Activated T-helper 1 cell treated with anti-CD3 and anti-CD28 coated beads, Interleukin-12 subunit alpha, Interleukin-12 subunit beta, Interleukin-2, Interleukin-4 antibody, amounts not matched to agents 30 ng/mL and 10 ng/mL and 1 ng/mL, durations not matched to agents 14 hours and 24 hours and 36 hours (primary cell): ENCODE measurements at regions of chr11 and their contacts with region 1.

Region 1: GRCh38 chr11:60841797-60842667 is at the start of gene CCDC86:
- DNase-seq: peak; percentile 98
- H3K4me3 Mint-ChIP-seq: peak within 1 kb of the TSS; percentile 91
- H3K27ac Mint-ChIP-seq: peak within 1 kb of the TSS; percentile 83
- H3K4me1 Mint-ChIP-seq: peaks cover 46% of the 10 kb centered on the region
- H3K27me3 Mint-ChIP-seq: peaks cover 1% of the 10 kb centered on the region
- total RNA-seq, gene CCDC86: 88.2 and 92.2 TPM in 2 replicates

Region 2: DNA sequence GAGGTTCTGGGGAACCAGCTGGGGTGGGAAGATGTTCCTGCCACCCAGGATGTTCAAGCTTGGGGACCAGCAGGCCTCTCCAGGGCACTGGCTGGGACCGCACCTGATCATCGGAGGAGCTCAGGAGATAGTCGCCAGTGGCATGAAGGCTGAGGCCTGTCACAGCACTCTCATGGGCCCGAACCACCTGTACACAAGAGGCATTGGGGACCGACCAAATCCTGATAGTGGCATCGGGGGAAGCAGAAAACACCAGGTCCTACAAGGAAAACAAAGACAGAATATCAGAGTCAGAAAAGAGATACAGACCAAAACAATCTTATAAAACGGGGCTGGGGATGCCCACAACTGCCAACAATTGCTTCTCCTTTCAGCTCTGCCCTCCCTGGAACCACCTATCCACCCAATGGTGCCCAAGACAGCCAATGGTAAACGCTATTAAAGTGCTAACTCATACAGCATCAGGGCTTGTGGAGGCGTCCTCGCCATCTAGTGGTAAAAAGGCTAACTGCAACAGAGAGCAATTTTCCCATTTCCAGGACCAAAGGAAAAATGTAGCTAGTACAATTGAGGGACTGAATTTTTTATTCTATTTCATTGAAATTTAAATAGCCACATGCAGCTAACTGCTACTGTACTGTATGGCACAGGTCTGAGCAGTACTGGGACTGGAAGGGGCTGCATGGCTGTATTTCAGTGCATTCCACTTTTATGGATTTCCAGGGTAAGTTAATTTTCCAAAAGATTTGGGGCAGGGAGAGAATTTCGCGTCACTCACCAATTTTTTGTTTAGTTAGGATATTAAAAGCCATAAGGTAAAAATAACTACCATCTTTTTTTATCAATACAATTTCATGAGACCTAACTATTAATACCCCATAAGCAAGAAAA is 57.3 kb after region 1 on chr11:
- intact Hi-C with region 1: loop called (anchors 1 kb)
- DNase-seq: no peak
- H3K4me3 Mint-ChIP-seq: no peak overlapping the region
- H3K27ac Mint-ChIP-seq: peak overlapping the region; percentile 12
- H3K4me1 Mint-ChIP-seq: peaks cover 10% of the 10 kb centered on the region
- H3K27me3 Mint-ChIP-seq: no peaks in the 10 kb centered on the region

Region 3: DNA sequence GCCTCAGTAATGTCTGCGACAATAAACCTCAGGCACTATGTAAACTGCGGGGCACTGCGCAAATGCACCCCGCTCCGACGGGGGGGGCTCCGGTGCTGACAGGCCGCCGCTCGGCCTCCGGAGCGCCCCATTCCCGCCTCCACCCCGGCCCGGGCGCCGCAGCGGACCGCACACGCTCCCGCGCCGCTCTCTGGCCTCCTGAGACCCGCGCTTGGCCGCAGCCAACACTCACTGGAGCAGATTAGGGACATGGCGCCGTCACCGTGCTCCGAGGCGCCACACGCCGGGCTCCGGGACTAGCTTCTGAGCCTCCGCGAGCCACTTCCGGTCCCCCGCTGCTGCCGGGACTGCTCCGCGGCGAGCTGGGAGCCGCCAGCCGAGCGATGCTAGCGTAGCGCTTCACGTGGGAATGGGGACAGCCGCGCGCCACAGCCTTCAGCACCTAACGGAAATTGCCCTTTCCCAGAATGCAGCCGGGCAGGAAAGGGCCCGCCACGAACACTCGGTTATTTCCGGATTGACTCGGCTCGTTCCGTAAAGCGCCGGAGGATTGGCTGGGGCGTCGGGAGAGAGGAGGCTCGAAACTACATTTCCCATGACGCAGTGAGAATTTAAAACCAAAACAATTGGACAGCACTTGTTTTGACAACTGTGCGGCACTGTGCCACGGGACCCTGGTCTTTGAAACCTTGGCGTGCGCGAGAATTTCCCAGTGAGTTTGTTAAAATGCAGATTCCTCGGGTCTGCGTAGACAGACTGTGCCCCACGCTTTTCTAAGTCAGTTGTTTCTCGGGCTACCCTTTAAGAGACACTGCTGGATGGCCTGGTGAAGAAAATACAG is 64.3 kb after region 1 on chr11 and contains the start of gene PRPF19:
- intact Hi-C with region 1: loop called (anchors 1 kb)
- DNase-seq: peak; percentile 99
- H3K4me3 Mint-ChIP-seq: peak within 1 kb of the TSS; percentile 90
- H3K27ac Mint-ChIP-seq: peak within 1 kb of the TSS; percentile 90
- H3K4me1 Mint-ChIP-seq: peaks cover 38% of the 10 kb centered on the region
- H3K27me3 Mint-ChIP-seq: peaks cover 15% of the 10 kb centered on the region
- total RNA-seq, gene PRPF19: 221 and 222 TPM in 2 replicates